Naive thymus-derived CD4-positive, alpha-beta T cell (primary cell): ENCODE measurements at regions of chr10 and their contacts with region 1.

Region 1: GRCh38 chr10:60517805-60518204 is 128.1 kb upstream of the ANK3 start:
- DNase-seq: no peak
- ATAC-seq: no peak
- H3K4me3 ChIP-seq: no peak overlapping the region
- H3K4me3 Mint-ChIP-seq: no peak overlapping the region
- H3K27ac ChIP-seq: no peak overlapping the region
- H3K27ac Mint-ChIP-seq: no peak overlapping the region
- H3K4me1 ChIP-seq: no peaks in the 10 kb centered on the region
- H3K4me1 Mint-ChIP-seq: peaks cover 7 to 48% (median 21%) of the 10 kb centered on the region in 7 donors
- H3K27me3 ChIP-seq: no peaks in the 10 kb centered on the region
- H3K27me3 Mint-ChIP-seq: no peaks in the 10 kb centered on the region

Region 2: GRCh38 chr10:60476451-60476850 is 41.4 kb before region 1 on chr10:
- CTCF ChIA-PET with region 1: no interaction called
- POLR2A ChIA-PET with region 1: no interaction called
- intact Hi-C with region 1: loop called in 1 of 2 experiments (anchors 2 kb)
- DNase-seq: no peak
- ATAC-seq: no peak
- H3K4me3 ChIP-seq: no peak overlapping the region
- H3K4me3 Mint-ChIP-seq: no peak overlapping the region
- H3K27ac ChIP-seq: no peak overlapping the region
- H3K27ac Mint-ChIP-seq: no peak overlapping the region
- H3K4me1 ChIP-seq: no peaks in the 10 kb centered on the region
- H3K4me1 Mint-ChIP-seq: peaks cover 0 to 41% (median 8%) of the 10 kb centered on the region in 7 donors
- H3K27me3 ChIP-seq: no peaks in the 10 kb centered on the region
- H3K27me3 Mint-ChIP-seq: no peaks in the 10 kb centered on the region

Region 3: GRCh38 chr10:60560451-60560850 is 42.6 kb after region 1 on chr10:
- CTCF ChIA-PET with region 1: no interaction called
- POLR2A ChIA-PET with region 1: no interaction called
- intact Hi-C with region 1: no loop called
- DNase-seq: no peak
- ATAC-seq: no peak
- H3K4me3 ChIP-seq: no peak overlapping the region
- H3K4me3 Mint-ChIP-seq: no peak overlapping the region
- H3K27ac ChIP-seq: no peak overlapping the region
- H3K27ac Mint-ChIP-seq: no peak overlapping the region
- H3K4me1 ChIP-seq: no peaks in the 10 kb centered on the region
- H3K4me1 Mint-ChIP-seq: peaks cover 0 to 39% (median 15%) of the 10 kb centered on the region in 7 donors
- H3K27me3 ChIP-seq: no peaks in the 10 kb centered on the region
- H3K27me3 Mint-ChIP-seq: no peaks in the 10 kb centered on the region